ENCODE measurements at regions of chr7 and their contacts with region 1.

Region 1: GRCh38 chr7:22854158-22855048 is 31.8 kb upstream of the TOMM7 start:
- DNase-seq: peak; percentile 88
- ATAC-seq: peak; percentile 83
- H3K4me3 ChIP-seq: peak overlapping the region; percentile 74 to 87 (median 80)
- H3K4me3 Mint-ChIP-seq: peak overlapping the region; percentile 97
- H3K27ac ChIP-seq: peak overlapping the region; percentile 71 to 87
- H3K27ac Mint-ChIP-seq: peak overlapping the region; percentile 94
- H3K4me1 ChIP-seq: peaks cover 17 to 27% of the 10 kb centered on the region in 2 donors
- H3K4me1 Mint-ChIP-seq: peaks cover 38% of the 10 kb centered on the region
- H3K27me3 ChIP-seq: no peaks in the 10 kb centered on the region
- H3K27me3 Mint-ChIP-seq: no peaks in the 10 kb centered on the region
- CTCF ChIP-seq: peak; percentile 84

Region 2: GRCh38 chr7:22696541-22697228 is 157.7 kb before region 1 on chr7:
- CTCF ChIA-PET with region 1: no interaction called
- POLR2A ChIA-PET with region 1: no interaction called
- intact Hi-C with region 1: no loop called
- DNase-seq: peak; percentile 60
- ATAC-seq: peak; percentile 28
- H3K4me3 ChIP-seq: peak overlapping the region in 1 of 5 experiments; percentile 16
- H3K4me3 Mint-ChIP-seq: peak overlapping the region; percentile 7
- H3K27ac ChIP-seq: peak overlapping the region; percentile 87 to 91
- H3K27ac Mint-ChIP-seq: peak overlapping the region; percentile 57
- H3K4me1 ChIP-seq: peaks cover 75 to 81% of the 10 kb centered on the region in 2 donors
- H3K4me1 Mint-ChIP-seq: peaks cover 76% of the 10 kb centered on the region
- H3K27me3 ChIP-seq: no peaks in the 10 kb centered on the region
- H3K27me3 Mint-ChIP-seq: no peaks in the 10 kb centered on the region
- CTCF ChIP-seq: no peak

Region 3: GRCh38 chr7:22822486-22823141 is 31.8 kb before region 1 on chr7 and contains the start of gene TOMM7:
- CTCF ChIA-PET with region 1: interaction called, 4 read pairs
- POLR2A ChIA-PET with region 1: no interaction called
- intact Hi-C with region 1: loop called (anchors 1 kb)
- DNase-seq: peak; percentile 97
- ATAC-seq: peak; percentile 98
- H3K4me3 ChIP-seq: peak within 1 kb of the TSS; percentile 82 to 97 (median 94)
- H3K4me3 Mint-ChIP-seq: peak within 1 kb of the TSS; percentile 98
- H3K27ac ChIP-seq: peak within 1 kb of the TSS; percentile 79 to 81
- H3K27ac Mint-ChIP-seq: peak within 1 kb of the TSS; percentile 97
- H3K4me1 ChIP-seq: peaks cover 12 to 21% of the 10 kb centered on the region in 2 donors
- H3K4me1 Mint-ChIP-seq: peaks cover 32% of the 10 kb centered on the region
- H3K27me3 ChIP-seq: no peaks in the 10 kb centered on the region
- H3K27me3 Mint-ChIP-seq: peaks cover 10% of the 10 kb centered on the region
- CTCF ChIP-seq: no peak
- total RNA-seq, gene TOMM7: 400 and 437 TPM in 2 replicates

Region 4: GRCh38 chr7:22872096-22872807 is 17.8 kb after region 1 on chr7:
- CTCF ChIA-PET with region 1: interaction called, 12 read pairs
- POLR2A ChIA-PET with region 1: no interaction called
- intact Hi-C with region 1: loop called (anchors 1 kb)
- DNase-seq: peak; percentile 64
- ATAC-seq: peak; percentile 98
- H3K4me3 ChIP-seq: peak overlapping the region in 4 of 5 experiments; percentile 24 to 51 (median 38)
- H3K4me3 Mint-ChIP-seq: peak overlapping the region; percentile 89
- H3K27ac ChIP-seq: peak overlapping the region; percentile 36 to 42
- H3K27ac Mint-ChIP-seq: peak overlapping the region; percentile 91
- H3K4me1 ChIP-seq: peaks cover 17 to 23% of the 10 kb centered on the region in 2 donors
- H3K4me1 Mint-ChIP-seq: peaks cover 31% of the 10 kb centered on the region
- H3K27me3 ChIP-seq: no peaks in the 10 kb centered on the region
- H3K27me3 Mint-ChIP-seq: no peaks in the 10 kb centered on the region
- CTCF ChIP-seq: no peak

Region 5: DNA sequence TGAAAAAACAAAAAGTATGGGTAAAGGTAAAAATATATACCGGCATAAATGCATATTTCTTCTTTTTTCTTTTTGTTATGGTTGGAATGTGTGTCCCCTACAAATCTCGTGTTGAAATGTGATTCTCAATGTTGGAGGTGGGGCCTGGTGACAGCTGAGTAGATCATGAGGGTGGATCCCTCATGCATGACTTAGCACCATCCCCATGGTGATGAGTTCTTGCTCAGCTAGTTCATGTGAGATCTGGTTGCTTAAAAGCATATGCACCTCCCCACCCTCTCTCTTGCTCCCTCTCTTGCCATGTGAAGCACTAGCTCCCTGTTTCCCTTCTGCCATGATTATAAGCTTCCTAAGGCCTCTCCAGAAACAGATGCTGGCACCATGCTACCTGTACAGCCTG is 66.3 kb after region 1 on chr7:
- CTCF ChIA-PET with region 1: no interaction called
- POLR2A ChIA-PET with region 1: no interaction called
- intact Hi-C with region 1: no loop called
- DNase-seq: no peak
- ATAC-seq: peak; percentile 43
- H3K4me3 ChIP-seq: no peak overlapping the region
- H3K4me3 Mint-ChIP-seq: no peak overlapping the region
- H3K27ac ChIP-seq: no peak overlapping the region
- H3K27ac Mint-ChIP-seq: no peak overlapping the region
- H3K4me1 ChIP-seq: no peaks in the 10 kb centered on the region
- H3K4me1 Mint-ChIP-seq: peaks cover 5% of the 10 kb centered on the region
- H3K27me3 ChIP-seq: no peaks in the 10 kb centered on the region
- H3K27me3 Mint-ChIP-seq: no peaks in the 10 kb centered on the region
- CTCF ChIP-seq: no peak

Region 6: GRCh38 chr7:22949944-22950343 is 95.5 kb after region 1 on chr7:
- CTCF ChIA-PET with region 1: interaction called, 4 read pairs
- POLR2A ChIA-PET with region 1: no interaction called
- intact Hi-C with region 1: loop called (anchors 10 kb)
- DNase-seq: no peak
- ATAC-seq: no peak
- H3K4me3 ChIP-seq: no peak overlapping the region
- H3K4me3 Mint-ChIP-seq: no peak overlapping the region
- H3K27ac ChIP-seq: no peak overlapping the region
- H3K27ac Mint-ChIP-seq: no peak overlapping the region
- H3K4me1 ChIP-seq: no peaks in the 10 kb centered on the region
- H3K4me1 Mint-ChIP-seq: no peaks in the 10 kb centered on the region
- H3K27me3 ChIP-seq: no peaks in the 10 kb centered on the region
- H3K27me3 Mint-ChIP-seq: no peaks in the 10 kb centered on the region
- CTCF ChIP-seq: no peak

Region 7: GRCh38 chr7:23105644-23106056 is 251.2 kb after region 1 on chr7 and contains the start of gene KLHL7:
- CTCF ChIA-PET with region 1: interaction called, 3 read pairs
- POLR2A ChIA-PET with region 1: no interaction called
- intact Hi-C with region 1: loop called (anchors 2 kb)
- DNase-seq: peak; percentile 96
- ATAC-seq: peak; percentile 96
- H3K4me3 ChIP-seq: peak within 1 kb of the TSS; percentile 86 to 99 (median 94)
- H3K4me3 Mint-ChIP-seq: peak within 1 kb of the TSS; percentile 99
- H3K27ac ChIP-seq: peak within 1 kb of the TSS; percentile 88 to 95
- H3K27ac Mint-ChIP-seq: peak within 1 kb of the TSS; percentile 97
- H3K4me1 ChIP-seq: peaks cover 15 to 16% of the 10 kb centered on the region in 2 donors
- H3K4me1 Mint-ChIP-seq: peaks cover 32% of the 10 kb centered on the region
- H3K27me3 ChIP-seq: no peaks in the 10 kb centered on the region
- H3K27me3 Mint-ChIP-seq: no peaks in the 10 kb centered on the region
- CTCF ChIP-seq: no peak
- total RNA-seq, gene KLHL7: 22.8 and 29.5 TPM in 2 replicates